ENCODE measurements at regions of chr22 and their contacts with region 1.

Region 1: DNA sequence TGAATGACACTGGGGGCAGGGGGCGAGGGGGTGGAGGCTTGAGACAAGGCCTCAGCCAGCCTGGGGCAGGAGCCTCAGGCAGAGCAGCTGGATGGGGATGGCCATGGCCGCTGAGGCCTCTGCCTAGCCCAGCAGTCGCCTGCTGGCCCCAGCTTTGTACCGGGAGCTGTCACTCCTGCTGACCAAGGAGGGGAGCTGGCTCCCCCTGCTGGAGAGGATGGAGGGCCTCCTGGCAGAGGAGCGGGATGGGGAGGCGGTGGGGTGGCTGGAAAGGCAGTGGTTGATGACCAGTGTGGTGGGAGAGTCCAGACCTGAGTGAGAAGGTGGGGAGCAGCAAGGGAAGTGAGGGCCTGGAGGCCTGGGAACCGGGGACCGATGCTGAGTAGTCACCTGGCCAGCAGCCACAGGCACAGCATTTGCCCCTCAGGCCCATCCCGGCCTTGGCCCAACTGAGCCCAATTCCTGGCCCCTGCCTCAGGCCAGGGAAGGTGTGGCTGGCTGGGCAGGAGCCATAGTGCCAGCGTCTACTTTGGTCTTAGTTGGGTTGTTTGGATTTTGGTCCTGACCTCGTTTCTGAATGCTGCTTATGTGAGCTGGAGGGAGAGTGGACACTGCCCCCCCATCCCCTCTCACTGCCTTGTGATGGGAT is 6.0 kb upstream of the SUSD2 start:
- DNase-seq: peak; percentile 65
- H3K4me3 ChIP-seq: no peak overlapping the region
- H3K27ac ChIP-seq: no peak overlapping the region
- H3K4me1 ChIP-seq: no peaks in the 10 kb centered on the region
- H3K27me3 ChIP-seq: no peaks in the 10 kb centered on the region
- CTCF ChIP-seq: peak; percentile 85 to 95
- POLR2A ChIP-seq: no peak

Region 2: GRCh38 chr22:23928187-23928586 is 247.1 kb before region 1 on chr22:
- CTCF ChIA-PET with region 1: interaction called, 13 read pairs
- POLR2A ChIA-PET with region 1: no interaction called
- dilution Hi-C with region 1: no loop called
- intact Hi-C with region 1: no loop called
- DNase-seq: no peak
- H3K4me3 ChIP-seq: no peak overlapping the region
- H3K27ac ChIP-seq: no peak overlapping the region
- H3K4me1 ChIP-seq: no peaks in the 10 kb centered on the region
- H3K27me3 ChIP-seq: no peaks in the 10 kb centered on the region
- CTCF ChIP-seq: no peak
- POLR2A ChIP-seq: no peak

Region 3: DNA sequence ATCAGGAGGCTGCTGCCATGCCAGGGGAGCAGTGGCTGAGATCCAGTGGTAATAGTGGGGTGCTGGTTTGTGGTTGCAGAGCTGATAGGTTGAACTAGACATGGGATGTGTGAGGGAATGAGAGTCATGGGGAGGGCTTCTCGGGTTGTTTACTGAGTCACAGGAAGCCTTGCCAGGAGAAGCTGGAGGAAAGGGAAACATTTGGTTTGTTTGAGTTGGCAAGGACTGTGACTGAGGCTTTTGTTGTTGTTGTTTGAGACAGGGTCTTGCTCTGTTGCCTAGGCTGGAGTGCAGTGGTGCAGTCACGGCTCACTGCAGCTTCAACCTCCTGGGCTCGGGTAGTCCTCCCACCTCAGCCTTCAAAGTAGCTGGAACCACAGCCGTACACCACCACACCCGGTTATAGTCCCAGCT is 114.9 kb before region 1 on chr22:
- CTCF ChIA-PET with region 1: interaction called, 38 read pairs
- POLR2A ChIA-PET with region 1: no interaction called
- dilution Hi-C with region 1: no loop called
- intact Hi-C with region 1: loop called (anchors 1 kb)
- DNase-seq: peak; percentile 97
- H3K4me3 ChIP-seq: no peak overlapping the region
- H3K27ac ChIP-seq: peak overlapping the region; percentile 90
- H3K4me1 ChIP-seq: peaks cover 32% of the 10 kb centered on the region
- H3K27me3 ChIP-seq: no peaks in the 10 kb centered on the region
- CTCF ChIP-seq: no peak
- POLR2A ChIP-seq: peak; percentile 24

Region 4: DNA sequence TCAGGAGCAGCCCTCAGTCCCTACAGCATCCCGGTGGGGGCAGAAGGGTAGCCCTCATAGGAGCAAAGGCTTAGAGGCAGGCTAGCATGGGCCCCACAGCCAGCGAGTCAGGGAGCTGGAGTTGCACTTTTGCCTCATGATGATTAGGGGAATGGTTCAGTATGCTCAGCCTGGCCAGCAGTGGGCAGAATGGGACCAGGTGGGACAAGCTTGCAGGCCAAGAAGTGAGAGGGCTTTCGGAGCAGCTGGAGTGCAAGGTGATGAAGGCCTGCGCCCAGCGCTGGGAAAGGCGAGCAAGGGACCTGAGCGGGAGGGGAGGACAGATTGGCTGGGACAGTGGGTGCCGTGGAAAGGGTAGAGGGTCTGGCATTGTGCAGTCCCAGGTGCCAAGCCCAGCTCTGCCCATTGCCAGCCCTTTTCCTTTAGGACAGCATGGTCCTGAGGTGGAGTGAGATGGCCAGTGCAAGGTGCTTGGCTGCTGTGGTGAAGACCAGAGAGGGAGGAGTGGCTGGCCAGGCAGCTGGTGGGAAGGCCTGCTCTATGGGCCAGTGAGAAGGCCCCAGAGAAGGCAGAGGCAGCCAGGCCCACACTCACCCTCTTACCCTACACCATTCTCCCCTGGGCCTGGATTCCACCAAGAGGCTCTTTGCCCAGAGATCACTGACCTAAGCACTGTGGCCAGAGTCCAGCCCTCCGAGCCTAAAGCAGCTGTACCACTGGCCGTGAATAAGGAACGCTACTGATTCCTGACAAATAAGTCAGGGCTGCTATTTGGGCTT is 41.9 kb before region 1 on chr22:
- CTCF ChIA-PET with region 1: interaction called, 20 read pairs
- POLR2A ChIA-PET with region 1: no interaction called
- dilution Hi-C with region 1: no loop called
- intact Hi-C with region 1: no loop called
- DNase-seq: no peak
- H3K4me3 ChIP-seq: no peak overlapping the region
- H3K27ac ChIP-seq: no peak overlapping the region
- H3K4me1 ChIP-seq: no peaks in the 10 kb centered on the region
- H3K27me3 ChIP-seq: no peaks in the 10 kb centered on the region
- CTCF ChIP-seq: peak in 1 of 2 donors; percentile 26
- POLR2A ChIP-seq: no peak